CD8-positive, alpha-beta T cell (primary cell): ENCODE measurements at regions of chr9 and their contacts with region 1.

Region 1: GRCh38 chr9:4366591-4367330 is 66.9 kb upstream of the GLIS3 start:
- DNase-seq: peak in 7 of 9 experiments; percentile 3 to 57 (median 38)
- ATAC-seq: no peak
- H3K4me3 ChIP-seq: no peak overlapping the region
- H3K4me3 Mint-ChIP-seq: no peak overlapping the region
- H3K27ac ChIP-seq: no peak overlapping the region
- H3K27ac Mint-ChIP-seq: no peak overlapping the region
- H3K4me1 ChIP-seq: no peaks in the 10 kb centered on the region
- H3K4me1 Mint-ChIP-seq: no peaks in the 10 kb centered on the region
- H3K27me3 ChIP-seq: no peaks in the 10 kb centered on the region
- H3K27me3 Mint-ChIP-seq: peaks cover 3% of the 10 kb centered on the region
- CTCF ChIP-seq: peak; percentile 64

Region 2: GRCh38 chr9:3240656-3241268 is 1126.0 kb before region 1 on chr9:
- CTCF ChIA-PET with region 1: no interaction called
- POLR2A ChIA-PET with region 1: no interaction called
- intact Hi-C with region 1: loop called in 1 of 2 experiments (anchors 5 kb)
- DNase-seq: peak; percentile 32 to 71 (median 59)
- ATAC-seq: peak; percentile 77
- H3K4me3 ChIP-seq: no peak overlapping the region
- H3K4me3 Mint-ChIP-seq: no peak overlapping the region
- H3K27ac ChIP-seq: no peak overlapping the region
- H3K27ac Mint-ChIP-seq: no peak overlapping the region
- H3K4me1 ChIP-seq: no peaks in the 10 kb centered on the region
- H3K4me1 Mint-ChIP-seq: no peaks in the 10 kb centered on the region
- H3K27me3 ChIP-seq: no peaks in the 10 kb centered on the region
- H3K27me3 Mint-ChIP-seq: no peaks in the 10 kb centered on the region
- CTCF ChIP-seq: peak; percentile 70

Region 3: DNA sequence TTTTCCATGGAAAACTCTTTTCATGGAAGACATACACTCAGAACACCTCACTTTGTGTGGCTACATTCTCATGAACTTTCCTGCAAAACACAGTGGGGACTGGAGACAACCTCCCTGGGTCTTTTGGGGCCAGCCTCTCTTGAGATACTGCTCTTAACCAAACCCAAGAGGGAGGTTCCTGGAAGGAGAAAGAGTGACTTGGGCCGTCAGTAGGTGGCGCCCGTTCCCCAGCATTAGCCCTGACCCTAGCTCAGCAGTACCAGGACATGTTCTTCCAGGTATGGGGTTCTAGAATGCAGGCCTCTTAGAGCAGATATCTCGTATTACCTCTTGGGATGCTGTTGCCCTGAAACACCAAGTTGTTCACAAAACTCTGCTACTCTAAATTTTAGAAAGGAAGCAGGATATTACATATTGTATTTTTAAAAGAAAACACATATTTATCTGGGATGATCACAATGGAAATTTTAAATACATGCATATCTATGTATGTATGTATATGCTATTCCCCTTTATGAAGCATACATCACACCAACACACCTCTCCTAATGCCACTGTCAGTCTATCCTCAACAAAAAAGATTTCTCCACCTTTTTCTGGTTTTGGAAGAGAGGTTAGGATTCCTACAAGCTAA is 51.1 kb before region 1 on chr9:
- CTCF ChIA-PET with region 1: interaction called, 114 read pairs
- POLR2A ChIA-PET with region 1: no interaction called
- intact Hi-C with region 1: loop called (anchors 1 kb)
- DNase-seq: peak; percentile 42 to 85 (median 72)
- ATAC-seq: peak; percentile 90
- H3K4me3 ChIP-seq: no peak overlapping the region
- H3K4me3 Mint-ChIP-seq: no peak overlapping the region
- H3K27ac ChIP-seq: no peak overlapping the region
- H3K27ac Mint-ChIP-seq: no peak overlapping the region
- H3K4me1 ChIP-seq: peaks cover 19% of the 10 kb centered on the region
- H3K4me1 Mint-ChIP-seq: peaks cover 19% of the 10 kb centered on the region
- H3K27me3 ChIP-seq: no peaks in the 10 kb centered on the region
- H3K27me3 Mint-ChIP-seq: peaks cover 5% of the 10 kb centered on the region
- CTCF ChIP-seq: peak; percentile 76

Region 4: GRCh38 chr9:4356306-4356705 is 10.5 kb before region 1 on chr9:
- CTCF ChIA-PET with region 1: interaction called, 17 read pairs
- POLR2A ChIA-PET with region 1: no interaction called
- intact Hi-C with region 1: no loop called
- DNase-seq: no peak
- ATAC-seq: no peak
- H3K4me3 ChIP-seq: no peak overlapping the region
- H3K4me3 Mint-ChIP-seq: no peak overlapping the region
- H3K27ac ChIP-seq: no peak overlapping the region
- H3K27ac Mint-ChIP-seq: no peak overlapping the region
- H3K4me1 ChIP-seq: no peaks in the 10 kb centered on the region
- H3K4me1 Mint-ChIP-seq: no peaks in the 10 kb centered on the region
- H3K27me3 ChIP-seq: no peaks in the 10 kb centered on the region
- H3K27me3 Mint-ChIP-seq: peaks cover 6% of the 10 kb centered on the region
- CTCF ChIP-seq: no peak

Region 5: GRCh38 chr9:4640027-4640426 is 273.3 kb after region 1 on chr9:
- CTCF ChIA-PET with region 1: interaction called, 10 read pairs
- POLR2A ChIA-PET with region 1: no interaction called
- intact Hi-C with region 1: loop called in 1 of 2 experiments (anchors 5 kb)
- DNase-seq: peak; percentile 15 to 75 (median 57)
- ATAC-seq: peak; percentile 71
- H3K4me3 ChIP-seq: no peak overlapping the region
- H3K4me3 Mint-ChIP-seq: no peak overlapping the region
- H3K27ac ChIP-seq: no peak overlapping the region
- H3K27ac Mint-ChIP-seq: no peak overlapping the region
- H3K4me1 ChIP-seq: no peaks in the 10 kb centered on the region
- H3K4me1 Mint-ChIP-seq: peaks cover 15% of the 10 kb centered on the region
- H3K27me3 ChIP-seq: no peaks in the 10 kb centered on the region
- H3K27me3 Mint-ChIP-seq: no peaks in the 10 kb centered on the region
- CTCF ChIP-seq: peak; percentile 70